ENCODE measurements at regions of chr12 and their contacts with region 1.

Region 1: GRCh38 chr12:12474931-12475795 is 87.5 kb downstream of the DUSP16 start:
- DNase-seq: peak; percentile 56
- H3K4me3 Mint-ChIP-seq: peak overlapping the region; percentile 74
- H3K27ac Mint-ChIP-seq: peak overlapping the region; percentile 96
- H3K4me1 Mint-ChIP-seq: peaks cover 73% of the 10 kb centered on the region
- H3K27me3 Mint-ChIP-seq: no peaks in the 10 kb centered on the region

Region 2: DNA sequence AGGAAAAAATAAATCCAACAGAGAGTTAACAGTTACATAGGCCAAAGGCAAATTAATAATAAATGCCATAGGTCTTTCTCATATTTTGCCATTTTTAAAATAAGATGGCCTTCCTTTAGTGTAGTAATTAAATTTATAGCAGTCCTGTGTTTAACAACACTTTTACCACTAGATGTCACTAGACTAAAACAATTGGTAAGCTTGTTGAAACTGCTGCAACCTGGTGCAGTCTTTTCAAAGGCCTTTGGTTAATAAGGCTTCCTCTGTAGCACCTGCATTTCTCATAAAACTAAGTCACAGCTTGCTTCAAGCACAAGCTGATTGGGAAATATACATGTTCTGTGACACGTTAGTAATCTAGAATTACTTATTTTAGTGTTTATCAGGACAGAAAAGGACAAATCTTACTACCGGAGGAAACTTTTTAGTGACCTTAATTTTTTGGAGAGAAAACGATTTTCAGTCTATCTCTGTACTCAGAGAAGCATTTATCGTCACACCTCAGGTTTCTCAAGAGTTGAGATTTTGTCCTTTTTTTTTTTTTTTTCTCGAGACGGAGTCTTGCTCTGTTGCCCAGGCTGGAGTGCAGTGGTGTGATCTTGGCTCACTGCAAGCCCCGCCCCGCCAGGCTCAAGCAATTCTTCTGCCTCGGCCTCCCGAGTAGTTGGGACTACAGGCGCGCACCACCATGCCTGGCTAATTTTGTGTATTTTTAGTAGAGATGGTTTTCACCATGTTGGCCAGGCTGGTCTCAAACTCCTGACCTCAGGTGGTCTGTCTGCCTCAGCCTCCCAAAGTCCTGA is 98.3 kb before region 1 on chr12:
- intact Hi-C with region 1: loop called (anchors 2 kb)
- DNase-seq: no peak
- H3K4me3 Mint-ChIP-seq: no peak overlapping the region
- H3K27ac Mint-ChIP-seq: peak overlapping the region; percentile 59
- H3K4me1 Mint-ChIP-seq: peaks cover 34% of the 10 kb centered on the region
- H3K27me3 Mint-ChIP-seq: no peaks in the 10 kb centered on the region

Region 3: GRCh38 chr12:12403264-12404248 is 71.6 kb before region 1 on chr12:
- intact Hi-C with region 1: loop called (anchors 1 kb)
- DNase-seq: no peak
- H3K4me3 Mint-ChIP-seq: peak overlapping the region; percentile 49
- H3K27ac Mint-ChIP-seq: peak overlapping the region; percentile 90
- H3K4me1 Mint-ChIP-seq: peaks cover 58% of the 10 kb centered on the region
- H3K27me3 Mint-ChIP-seq: no peaks in the 10 kb centered on the region

Region 4: DNA sequence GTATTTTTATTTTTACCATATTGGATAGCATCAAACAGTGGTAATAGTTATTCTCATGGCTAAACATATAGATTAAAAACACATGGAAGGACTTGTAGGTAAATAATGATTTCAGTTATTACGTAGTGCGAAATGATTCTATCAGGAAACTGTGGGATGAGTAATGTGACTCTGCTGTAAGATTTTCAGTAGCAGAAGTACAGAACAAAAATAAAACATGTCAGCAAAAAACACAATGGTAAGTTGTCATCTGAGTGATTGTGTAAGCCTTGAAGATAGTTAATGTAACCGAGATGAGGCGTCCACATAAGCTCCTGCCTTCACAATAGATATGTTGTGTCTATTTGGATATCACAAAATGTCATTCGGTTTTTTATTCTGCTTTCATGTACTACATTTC is 18.5 kb before region 1 on chr12:
- intact Hi-C with region 1: loop called (anchors 1 kb)
- DNase-seq: no peak
- H3K4me3 Mint-ChIP-seq: peak overlapping the region; percentile 55
- H3K27ac Mint-ChIP-seq: peak overlapping the region; percentile 96
- H3K4me1 Mint-ChIP-seq: peaks cover 55% of the 10 kb centered on the region
- H3K27me3 Mint-ChIP-seq: no peaks in the 10 kb centered on the region

Region 5: DNA sequence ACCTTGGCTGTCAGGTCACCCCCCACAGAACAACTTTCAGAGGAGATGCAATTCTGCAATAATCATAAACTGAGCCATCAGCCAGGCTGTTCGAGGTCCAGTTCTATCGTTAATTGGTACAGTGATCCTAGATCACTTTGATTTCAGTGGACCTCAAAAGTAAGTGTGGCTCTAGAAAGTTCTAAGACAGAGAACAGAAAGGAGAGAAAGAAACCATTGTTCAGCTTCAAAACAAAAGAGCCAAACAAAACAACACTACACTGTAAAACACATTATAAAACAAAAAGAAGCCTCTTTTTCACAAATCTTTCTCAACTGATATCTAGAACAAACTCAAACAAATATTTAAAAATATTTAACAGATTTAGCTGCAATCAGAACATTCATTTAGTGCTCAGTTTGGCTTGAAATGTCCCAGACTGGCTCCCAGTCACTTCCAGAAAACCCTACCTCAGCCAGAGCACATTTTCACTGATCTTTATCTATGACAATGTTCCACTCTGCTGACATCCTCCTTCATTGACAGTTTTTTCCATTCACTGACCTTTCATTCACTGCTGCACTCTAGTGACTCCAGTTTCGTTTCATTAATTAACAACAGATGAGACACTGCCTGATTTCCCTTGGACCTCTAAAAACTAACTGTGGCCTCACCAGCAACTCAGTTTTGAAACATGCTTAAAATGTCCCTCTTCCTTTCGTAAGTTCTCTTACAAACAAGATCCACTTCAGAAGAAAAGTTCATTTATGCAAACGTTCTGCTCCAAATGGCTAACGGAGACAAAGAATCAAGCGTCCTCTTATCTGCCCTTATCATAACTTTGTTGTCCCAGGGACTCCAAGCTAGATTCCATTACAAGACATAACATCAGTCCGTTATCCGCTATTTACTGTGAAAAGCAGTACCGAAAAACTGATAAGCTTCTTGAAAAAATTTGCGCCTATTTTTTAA is 30.7 kb after region 1 on chr12:
- intact Hi-C with region 1: loop called (anchors 2 kb)
- DNase-seq: no peak
- H3K4me3 Mint-ChIP-seq: peak overlapping the region; percentile 53
- H3K27ac Mint-ChIP-seq: peak overlapping the region; percentile 97
- H3K4me1 Mint-ChIP-seq: peaks cover 70% of the 10 kb centered on the region
- H3K27me3 Mint-ChIP-seq: no peaks in the 10 kb centered on the region

Region 6: DNA sequence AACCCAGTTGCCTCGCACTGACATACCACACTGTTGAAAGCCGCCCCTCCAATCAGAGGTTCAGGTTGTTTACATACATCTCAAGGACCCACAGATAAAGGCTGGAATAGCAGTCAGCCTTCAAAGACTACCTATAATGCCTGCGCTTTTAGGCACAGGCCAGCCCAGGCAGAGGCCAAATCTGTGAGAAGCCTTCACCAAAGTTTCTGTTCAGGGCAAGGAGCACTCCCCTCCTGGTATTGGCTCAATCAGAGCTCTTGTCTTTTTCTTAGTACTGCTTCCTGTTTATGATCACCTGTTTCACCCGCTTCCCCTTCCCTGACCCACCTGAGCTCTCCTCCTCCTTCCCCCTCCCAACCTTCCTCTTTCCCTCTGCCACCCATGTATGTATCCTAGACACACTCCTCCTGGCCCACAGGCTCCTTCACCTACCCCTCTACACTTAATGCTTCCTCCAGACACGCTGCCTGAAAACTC is 52.7 kb after region 1 on chr12:
- intact Hi-C with region 1: no loop called
- DNase-seq: no peak
- H3K4me3 Mint-ChIP-seq: no peak overlapping the region
- H3K27ac Mint-ChIP-seq: peak overlapping the region; percentile 81
- H3K4me1 Mint-ChIP-seq: peaks cover 32% of the 10 kb centered on the region
- H3K27me3 Mint-ChIP-seq: no peaks in the 10 kb centered on the region

Region 7: DNA sequence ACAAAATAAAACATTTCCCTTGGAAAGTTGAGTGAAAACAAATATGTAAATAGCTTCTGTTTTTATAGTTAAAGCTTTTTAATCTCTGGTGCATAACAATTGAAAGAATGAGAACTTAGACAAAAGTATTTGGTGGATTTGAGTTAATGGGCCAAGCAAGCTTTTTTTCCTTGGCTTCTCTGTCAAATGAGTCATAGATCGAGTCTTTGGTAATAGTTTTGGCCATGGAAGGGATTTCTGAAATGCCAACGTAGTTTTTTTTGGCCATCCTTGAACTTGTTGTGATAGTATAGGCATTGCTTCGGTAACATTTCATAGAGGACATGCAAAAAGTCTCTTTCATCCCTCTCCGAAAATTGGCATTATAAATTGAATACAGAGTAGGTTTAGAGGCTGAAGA is 185.9 kb after region 1 on chr12:
- intact Hi-C with region 1: no loop called
- DNase-seq: no peak
- H3K4me3 Mint-ChIP-seq: no peak overlapping the region
- H3K27ac Mint-ChIP-seq: no peak overlapping the region
- H3K4me1 Mint-ChIP-seq: peaks cover 3% of the 10 kb centered on the region
- H3K27me3 Mint-ChIP-seq: no peaks in the 10 kb centered on the region

Region 8: GRCh38 chr12:12704593-12705230 is 229.5 kb after region 1 on chr12:
- intact Hi-C with region 1: loop called (anchors 1 kb)
- DNase-seq: no peak
- H3K4me3 Mint-ChIP-seq: no peak overlapping the region
- H3K27ac Mint-ChIP-seq: peak overlapping the region; percentile 36
- H3K4me1 Mint-ChIP-seq: peaks cover 21% of the 10 kb centered on the region
- H3K27me3 Mint-ChIP-seq: no peaks in the 10 kb centered on the region

Measured in activated T-helper 2 cell treated with anti-CD3 and anti-CD28 coated beads, Interferon-gamma antibody, Interleukin-2, Interleukin-4, amounts not matched to agents 10 μg/mL and 5 μg/mL and 100 μg/mL, durations not matched to agents 14 hours and 24 hours and 36 hours (primary cell).